Right ventricle myocardium inferior (tissue), 1 donor: ENCODE measurements at regions of chr9 and their contacts with region 1.

Region 1: GRCh38 chr9:116572095-116572748 is 114.9 kb upstream of the TRIM32 start:
- DNase-seq: peak; percentile 94
- ATAC-seq: peak; percentile 97

Region 2: GRCh38 chr9:115591584-115591984 is 980.6 kb before region 1 on chr9:
- intact Hi-C with region 1: loop called (anchors 2 kb)
- DNase-seq: no peak
- ATAC-seq: peak; percentile 78

Region 3: DNA sequence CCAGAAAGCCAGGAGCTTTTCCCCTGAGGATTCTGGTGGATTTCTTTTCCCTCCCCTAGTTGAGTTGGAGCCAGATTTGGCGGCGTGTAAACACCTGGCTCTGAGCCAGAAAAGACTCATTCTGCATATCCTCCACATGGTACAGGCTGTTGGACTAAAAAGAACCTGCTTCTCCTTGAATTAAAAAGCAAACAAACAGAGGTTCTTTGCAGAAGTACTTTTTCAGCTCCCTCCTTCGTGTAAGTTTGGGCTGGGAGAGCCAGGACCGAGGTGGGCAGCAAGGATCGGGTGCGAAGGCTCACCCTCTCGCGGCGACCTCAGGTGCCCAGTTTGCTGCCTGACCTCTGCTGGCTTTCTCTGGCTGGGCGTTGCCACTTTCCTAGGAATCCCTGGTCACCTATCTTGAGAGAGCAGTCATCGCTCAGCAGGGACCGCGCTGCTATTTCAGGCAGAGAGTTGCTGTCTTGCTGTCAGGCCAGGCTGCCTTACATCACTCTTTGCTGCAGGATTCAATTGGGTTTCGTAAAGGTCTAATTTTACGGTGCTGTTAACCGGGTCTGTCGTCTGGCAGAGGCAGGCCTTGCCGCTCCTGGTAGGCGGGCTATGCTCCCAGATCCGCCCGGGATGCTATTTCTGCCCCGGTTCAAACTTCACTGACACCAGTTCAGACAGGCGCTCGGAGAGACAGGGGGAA is 415.5 kb before region 1 on chr9:
- intact Hi-C with region 1: loop called (anchors 2 kb)
- DNase-seq: peak; percentile 83
- ATAC-seq: peak; percentile 92

Region 4: GRCh38 chr9:116355153-116355921 is 216.9 kb before region 1 on chr9:
- intact Hi-C with region 1: loop called (anchors 10 kb)
- DNase-seq: no peak
- ATAC-seq: peak; percentile 90

Region 5: GRCh38 chr9:116549061-116549664 is 23.1 kb before region 1 on chr9:
- intact Hi-C with region 1: no loop called
- DNase-seq: peak; percentile 93
- ATAC-seq: peak; percentile 96

Region 6: DNA sequence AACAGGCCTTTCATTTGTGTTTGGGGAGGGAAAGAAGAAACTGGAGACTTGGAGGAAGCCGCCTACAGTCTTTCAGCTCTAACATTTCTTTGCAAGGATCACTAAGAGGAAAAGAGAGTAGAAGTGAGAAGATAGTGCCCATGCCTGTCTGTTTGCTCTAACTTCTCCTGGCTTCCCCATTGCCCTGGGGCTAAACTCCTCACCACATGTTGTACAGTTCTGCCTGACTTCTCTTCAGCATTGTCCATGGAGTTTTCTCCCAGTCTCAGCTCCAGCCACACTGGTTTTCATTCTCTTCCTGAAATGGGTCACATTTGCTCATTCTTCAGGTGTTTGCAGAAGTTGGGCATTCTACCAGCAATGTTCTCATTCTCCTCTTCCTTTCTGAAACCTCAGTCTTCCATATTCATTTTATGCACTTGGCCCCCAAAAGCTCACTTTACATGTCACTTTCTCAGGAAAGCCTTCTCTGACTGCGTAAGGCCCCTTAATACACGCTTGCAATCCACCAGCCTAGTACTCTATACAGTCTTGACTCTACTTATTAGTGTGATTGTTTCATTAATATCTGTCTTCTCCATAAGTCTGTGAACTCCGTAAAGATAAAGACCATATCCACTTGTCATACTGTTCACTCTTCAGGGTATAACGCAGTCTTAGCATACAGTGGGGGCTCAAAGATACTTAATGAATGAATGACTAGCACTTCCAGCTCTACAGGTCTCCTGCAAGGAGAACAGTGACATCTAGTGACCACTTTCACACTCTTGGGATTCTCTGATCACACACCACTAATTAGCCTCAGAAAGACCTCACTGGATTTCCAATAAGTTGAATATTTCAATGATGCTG is 74.7 kb after region 1 on chr9:
- intact Hi-C with region 1: loop called (anchors 2 kb)
- DNase-seq: no peak
- ATAC-seq: peak; percentile 79

Region 7: DNA sequence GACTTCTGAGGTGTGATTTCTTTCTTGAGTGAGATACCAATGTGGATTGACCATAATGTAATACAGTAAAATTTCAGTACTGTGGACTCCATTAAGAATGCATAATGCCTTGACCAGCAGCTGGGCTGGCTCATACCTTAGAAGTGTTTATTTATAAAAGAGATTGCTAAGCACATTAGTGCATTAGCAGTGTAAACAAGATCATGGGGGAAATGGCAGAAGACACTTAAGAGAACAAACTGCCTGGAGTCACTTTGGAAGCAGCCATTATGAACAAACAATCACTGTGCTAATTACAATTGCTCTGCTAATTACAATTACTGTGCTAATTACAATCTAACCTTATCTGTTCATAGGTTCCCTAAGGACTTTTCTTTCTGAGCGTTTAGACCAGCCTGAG is 219.1 kb after region 1 on chr9:
- intact Hi-C with region 1: no loop called
- DNase-seq: no peak
- ATAC-seq: no peak